ENCODE measurements at regions of chr10 and their contacts with region 1.

Region 1: GRCh38 chr10:69202332-69202731 is 17.8 kb upstream of the HKDC1 start:
- DNase-seq: no peak
- ATAC-seq: no peak
- H3K4me3 ChIP-seq: no peak overlapping the region
- H3K27ac ChIP-seq: no peak overlapping the region
- H3K4me1 ChIP-seq: no peaks in the 10 kb centered on the region
- H3K27me3 ChIP-seq: no peaks in the 10 kb centered on the region
- CTCF ChIP-seq: no peak

Region 2: GRCh38 chr10:68973975-68974374 is 228.4 kb before region 1 on chr10:
- intact Hi-C with region 1: loop called in 1 of 2 experiments (anchors 10 kb)
- DNase-seq: no peak
- ATAC-seq: no peak
- H3K4me3 ChIP-seq: no peak overlapping the region
- H3K27ac ChIP-seq: no peak overlapping the region
- H3K4me1 ChIP-seq: no peaks in the 10 kb centered on the region
- H3K27me3 ChIP-seq: no peaks in the 10 kb centered on the region
- CTCF ChIP-seq: no peak

Region 3: DNA sequence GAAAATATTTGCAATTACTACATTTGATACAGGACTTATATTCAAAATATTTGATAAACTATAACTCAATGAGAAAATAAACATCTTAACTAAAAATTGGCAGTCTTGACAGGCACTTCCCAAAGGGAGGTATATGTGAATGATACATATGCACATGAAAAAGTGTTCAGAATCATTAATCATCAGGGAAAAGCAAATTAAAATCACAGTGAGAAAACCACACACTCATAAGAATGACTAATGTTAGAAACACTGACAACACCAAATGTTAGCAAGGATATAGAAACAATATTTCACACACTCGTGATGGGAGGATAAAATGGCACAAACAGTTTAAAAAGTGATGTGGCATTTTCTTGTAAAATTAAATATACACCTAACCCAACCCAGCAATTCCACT is 82.4 kb before region 1 on chr10:
- intact Hi-C with region 1: no loop called
- DNase-seq: no peak
- ATAC-seq: no peak
- H3K4me3 ChIP-seq: no peak overlapping the region
- H3K27ac ChIP-seq: no peak overlapping the region
- H3K4me1 ChIP-seq: peaks cover 6% of the 10 kb centered on the region
- H3K27me3 ChIP-seq: no peaks in the 10 kb centered on the region
- CTCF ChIP-seq: no peak

Region 4: DNA sequence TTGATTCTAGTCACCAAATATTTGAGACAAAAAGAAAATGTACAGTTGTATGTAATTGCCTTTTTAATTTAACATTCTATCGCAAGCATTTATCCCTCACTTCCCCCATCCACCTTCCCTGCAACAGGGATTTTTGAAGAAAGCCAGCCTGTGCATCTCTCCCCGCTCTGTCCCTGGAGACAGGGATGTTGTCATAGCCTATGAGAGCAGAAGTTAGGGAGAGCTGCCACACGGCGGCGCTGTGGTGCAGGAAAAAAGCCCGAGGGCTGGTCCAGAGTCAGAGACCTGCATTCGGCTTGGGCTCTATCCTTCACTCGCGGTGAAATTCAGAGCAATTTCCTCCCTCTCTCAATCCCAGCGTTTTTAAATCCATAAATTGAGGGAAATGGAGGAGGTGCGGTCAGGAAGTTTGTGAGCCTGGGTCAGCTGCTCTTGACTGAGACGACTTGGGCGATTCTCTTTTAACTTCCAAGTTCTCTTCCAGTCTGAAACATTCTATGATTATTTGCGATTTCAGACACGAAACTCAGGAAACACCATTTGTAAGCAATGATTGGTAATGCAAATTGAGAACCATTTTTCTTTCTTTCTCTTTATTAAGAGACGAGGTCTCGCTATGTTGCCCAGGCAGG is 35.3 kb after region 1 on chr10:
- intact Hi-C with region 1: no loop called
- DNase-seq: peak; percentile 85 to 93
- ATAC-seq: peak; percentile 96 to 100 (median 100)
- H3K4me3 ChIP-seq: no peak overlapping the region
- H3K27ac ChIP-seq: no peak overlapping the region
- H3K4me1 ChIP-seq: peaks cover 5% of the 10 kb centered on the region
- H3K27me3 ChIP-seq: no peaks in the 10 kb centered on the region
- CTCF ChIP-seq: peak; percentile 97

Measured in psoas muscle (tissue), 8 donors.